A673 (cell line): ENCODE measurements at regions of chr1 and their contacts with region 1.

Region 1: GRCh38 chr1:24391882-24392603 is 21.5 kb downstream of the STPG1 start:
- DNase-seq: peak; percentile 75
- H3K4me3 ChIP-seq: no peak overlapping the region
- H3K27ac ChIP-seq: no peak overlapping the region
- H3K4me1 ChIP-seq: peaks cover 24% of the 10 kb centered on the region
- H3K27me3 ChIP-seq: no peaks in the 10 kb centered on the region
- CTCF ChIP-seq: peak; percentile 88

Region 2: DNA sequence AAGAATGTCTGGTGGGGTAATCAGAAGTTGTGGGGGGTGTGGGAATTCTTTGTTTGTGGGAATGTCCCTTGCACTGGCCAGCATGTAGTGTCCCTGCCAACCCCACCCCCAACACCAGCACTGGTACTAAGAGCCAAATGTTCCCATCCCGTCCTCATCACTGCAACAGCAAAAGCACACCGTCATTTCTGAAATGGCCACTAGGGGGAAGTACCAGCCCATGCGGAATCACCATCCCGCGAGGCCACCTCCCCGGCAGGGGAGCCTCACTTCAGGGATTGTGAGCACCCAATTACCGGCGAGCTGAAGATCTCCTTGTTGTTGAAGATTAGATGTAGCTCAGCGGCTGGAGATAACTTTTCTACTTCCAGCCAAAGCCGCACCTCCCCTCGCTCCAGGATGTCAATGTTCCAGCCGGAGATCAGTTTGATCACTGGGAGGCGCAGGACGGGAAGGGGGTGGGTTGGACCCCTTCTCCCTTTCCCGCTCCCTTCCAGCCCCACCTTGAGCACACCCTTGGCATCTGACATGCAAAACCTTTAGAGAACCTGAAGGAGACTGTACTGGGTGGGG is 321.1 kb before region 1 on chr1:
- CTCF ChIA-PET with region 1: interaction called, 4 read pairs
- POLR2A ChIA-PET with region 1: no interaction called
- intact Hi-C with region 1: loop called (anchors 2 kb)
- DNase-seq: peak; percentile 88
- H3K4me3 ChIP-seq: no peak overlapping the region
- H3K27ac ChIP-seq: no peak overlapping the region
- H3K4me1 ChIP-seq: no peaks in the 10 kb centered on the region
- H3K27me3 ChIP-seq: no peaks in the 10 kb centered on the region
- CTCF ChIP-seq: peak; percentile 95

Region 3: GRCh38 chr1:24201941-24202440 is 190.1 kb before region 1 on chr1:
- CTCF ChIA-PET with region 1: interaction called, 159 read pairs
- POLR2A ChIA-PET with region 1: no interaction called
- intact Hi-C with region 1: loop called (anchors 1 kb)
- DNase-seq: peak; percentile 84
- H3K4me3 ChIP-seq: no peak overlapping the region
- H3K27ac ChIP-seq: no peak overlapping the region
- H3K4me1 ChIP-seq: peaks cover 4% of the 10 kb centered on the region
- H3K27me3 ChIP-seq: no peaks in the 10 kb centered on the region
- CTCF ChIP-seq: peak; percentile 90

Region 4: GRCh38 chr1:24415334-24415909 is 23.4 kb after region 1 on chr1 and contains the start of gene NIPAL3:
- CTCF ChIA-PET with region 1: interaction called, 10 read pairs
- POLR2A ChIA-PET with region 1: no interaction called
- intact Hi-C with region 1: no loop called
- DNase-seq: peak; percentile 99
- H3K4me3 ChIP-seq: peak within 1 kb of the TSS; percentile 61
- H3K27ac ChIP-seq: no peak within 1 kb of the TSS
- H3K4me1 ChIP-seq: peaks cover 29% of the 10 kb centered on the region
- H3K27me3 ChIP-seq: no peaks in the 10 kb centered on the region
- CTCF ChIP-seq: peak; percentile 86
- total RNA-seq, gene NIPAL3: 6.5 and 7.3 TPM in 2 replicates

Region 5: GRCh38 chr1:24635195-24635843 is 243.3 kb after region 1 on chr1:
- CTCF ChIA-PET with region 1: no interaction called
- POLR2A ChIA-PET with region 1: no interaction called
- intact Hi-C with region 1: loop called (anchors 5 kb)
- DNase-seq: peak; percentile 86
- H3K4me3 ChIP-seq: no peak overlapping the region
- H3K27ac ChIP-seq: no peak overlapping the region
- H3K4me1 ChIP-seq: peaks cover 4% of the 10 kb centered on the region
- H3K27me3 ChIP-seq: no peaks in the 10 kb centered on the region
- CTCF ChIP-seq: peak; percentile 82

Region 6: GRCh38 chr1:25556791-25557476 is 1164.9 kb after region 1 on chr1:
- CTCF ChIA-PET with region 1: no interaction called
- POLR2A ChIA-PET with region 1: no interaction called
- intact Hi-C with region 1: no loop called
- DNase-seq: no peak
- H3K4me3 ChIP-seq: no peak overlapping the region
- H3K27ac ChIP-seq: no peak overlapping the region
- H3K4me1 ChIP-seq: no peaks in the 10 kb centered on the region
- H3K27me3 ChIP-seq: no peaks in the 10 kb centered on the region
- CTCF ChIP-seq: no peak